CD8-positive, alpha-beta T cell (primary cell): ENCODE measurements at regions of chr2 and their contacts with region 1.

Region 1: DNA sequence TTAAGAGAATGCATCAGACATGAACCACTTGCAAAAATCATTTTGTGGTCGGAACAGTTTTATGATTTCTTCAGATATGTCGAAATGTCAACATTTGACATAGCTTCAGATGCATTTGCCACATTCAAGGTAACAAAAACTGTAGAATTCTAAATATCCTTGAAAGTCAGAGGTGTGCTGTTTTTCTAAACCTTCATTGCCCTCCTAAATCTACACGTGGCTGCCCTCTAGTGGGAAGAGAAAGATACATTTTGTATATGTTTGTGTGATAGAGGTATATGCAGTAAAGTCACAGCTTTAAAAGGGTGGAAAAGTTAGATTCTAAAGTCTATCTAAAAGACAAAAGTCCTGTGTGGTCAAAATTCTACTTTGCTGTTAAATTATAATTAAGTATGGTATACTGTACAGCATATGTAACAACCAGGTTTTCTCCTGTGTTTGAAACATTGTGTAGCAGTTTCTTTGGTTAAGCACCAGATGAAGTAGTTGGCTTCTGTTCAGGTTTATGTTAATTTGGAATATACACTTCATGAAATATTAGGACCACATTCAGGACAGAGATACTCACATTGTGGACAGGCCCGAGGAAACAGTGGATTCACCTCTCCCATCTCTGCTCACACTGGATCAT is 65.9 kb upstream of the ITM2C start:
- DNase-seq: peak in 7 of 9 experiments; percentile 22 to 76 (median 51)
- ATAC-seq: peak; percentile 32
- H3K4me3 ChIP-seq: no peak overlapping the region
- H3K4me3 Mint-ChIP-seq: no peak overlapping the region
- H3K27ac ChIP-seq: no peak overlapping the region
- H3K27ac Mint-ChIP-seq: peak overlapping the region; percentile 74
- H3K4me1 ChIP-seq: peaks cover 33% of the 10 kb centered on the region
- H3K4me1 Mint-ChIP-seq: peaks cover 13% of the 10 kb centered on the region
- H3K27me3 ChIP-seq: no peaks in the 10 kb centered on the region
- H3K27me3 Mint-ChIP-seq: no peaks in the 10 kb centered on the region
- CTCF ChIP-seq: peak; percentile 87

Region 2: DNA sequence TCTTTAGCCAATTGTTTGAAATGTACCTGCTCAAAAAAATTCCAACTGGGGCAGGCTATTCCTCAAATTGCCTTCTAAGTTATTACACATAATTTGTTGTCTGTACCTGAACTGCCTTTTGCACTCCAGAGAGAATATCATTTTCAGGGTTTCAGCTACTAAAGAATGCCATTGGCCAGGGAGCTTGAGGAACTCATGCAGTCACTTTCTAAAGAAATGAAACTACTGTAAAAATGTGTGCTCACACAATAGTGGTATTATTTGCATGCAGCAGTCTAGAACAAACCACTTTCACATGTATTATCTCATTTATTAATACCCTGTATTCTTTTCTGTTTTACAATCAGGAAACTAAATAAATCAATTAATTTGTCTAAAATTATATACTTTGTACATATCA is 1680.0 kb before region 1 on chr2:
- CTCF ChIA-PET with region 1: no interaction called
- POLR2A ChIA-PET with region 1: no interaction called
- intact Hi-C with region 1: no loop called
- DNase-seq: no peak
- ATAC-seq: no peak
- H3K4me3 ChIP-seq: no peak overlapping the region
- H3K4me3 Mint-ChIP-seq: no peak overlapping the region
- H3K27ac ChIP-seq: no peak overlapping the region
- H3K27ac Mint-ChIP-seq: no peak overlapping the region
- H3K4me1 ChIP-seq: no peaks in the 10 kb centered on the region
- H3K4me1 Mint-ChIP-seq: no peaks in the 10 kb centered on the region
- H3K27me3 ChIP-seq: no peaks in the 10 kb centered on the region
- H3K27me3 Mint-ChIP-seq: no peaks in the 10 kb centered on the region
- CTCF ChIP-seq: no peak

Region 3: DNA sequence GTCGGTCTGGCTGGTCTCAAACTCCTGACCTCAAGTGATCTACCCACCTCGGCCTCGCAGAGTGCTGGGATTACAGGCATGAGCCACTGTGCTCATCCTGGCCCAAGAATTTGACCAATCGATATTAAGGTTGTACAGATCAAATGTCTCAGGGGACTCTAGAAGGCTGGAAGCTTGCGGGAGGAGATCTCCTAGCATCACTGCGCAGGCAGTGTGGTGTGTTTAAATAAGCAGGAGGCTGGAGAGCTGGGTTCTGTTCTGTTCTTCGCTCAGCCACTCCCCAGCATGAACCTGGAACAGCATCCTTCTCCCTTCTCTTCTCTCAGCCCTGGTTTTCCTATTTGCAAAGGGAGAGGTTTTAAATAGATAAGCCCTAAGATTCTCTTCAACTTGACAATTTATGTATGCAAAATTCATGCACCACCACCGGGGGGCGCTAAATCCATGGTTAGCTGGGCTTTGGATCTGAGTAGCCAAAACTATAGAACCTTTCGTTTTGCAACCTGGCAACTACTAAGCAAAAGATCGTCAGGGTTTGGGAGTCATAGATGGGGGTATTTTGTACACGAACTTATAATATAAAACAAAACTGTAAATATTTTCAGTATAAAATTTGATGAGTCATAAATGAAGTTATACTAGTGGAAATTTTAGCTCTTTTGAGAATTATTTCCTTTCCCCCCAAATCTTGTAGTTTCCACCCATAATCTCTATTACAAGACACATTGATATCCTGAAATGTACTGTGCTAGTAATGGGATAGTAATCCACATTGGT is 790.8 kb before region 1 on chr2:
- CTCF ChIA-PET with region 1: no interaction called
- POLR2A ChIA-PET with region 1: no interaction called
- intact Hi-C with region 1: loop called (anchors 5 kb)
- DNase-seq: peak; percentile 56 to 87 (median 73)
- ATAC-seq: peak; percentile 48
- H3K4me3 ChIP-seq: no peak overlapping the region
- H3K4me3 Mint-ChIP-seq: no peak overlapping the region
- H3K27ac ChIP-seq: no peak overlapping the region
- H3K27ac Mint-ChIP-seq: no peak overlapping the region
- H3K4me1 ChIP-seq: no peaks in the 10 kb centered on the region
- H3K4me1 Mint-ChIP-seq: peaks cover 3% of the 10 kb centered on the region
- H3K27me3 ChIP-seq: no peaks in the 10 kb centered on the region
- H3K27me3 Mint-ChIP-seq: no peaks in the 10 kb centered on the region
- CTCF ChIP-seq: peak; percentile 83

Region 4: GRCh38 chr2:230319211-230319862 is 479.5 kb before region 1 on chr2:
- CTCF ChIA-PET with region 1: no interaction called
- POLR2A ChIA-PET with region 1: no interaction called
- intact Hi-C with region 1: loop called in 1 of 2 experiments (anchors 10 kb)
- DNase-seq: peak; percentile 37 to 92 (median 76)
- ATAC-seq: peak; percentile 96
- H3K4me3 ChIP-seq: peak overlapping the region; percentile 7 to 24
- H3K4me3 Mint-ChIP-seq: peak overlapping the region; percentile 63
- H3K27ac ChIP-seq: peak overlapping the region; percentile 58 to 61
- H3K27ac Mint-ChIP-seq: peak overlapping the region; percentile 89
- H3K4me1 ChIP-seq: peaks cover 52% of the 10 kb centered on the region
- H3K4me1 Mint-ChIP-seq: peaks cover 69% of the 10 kb centered on the region
- H3K27me3 ChIP-seq: no peaks in the 10 kb centered on the region
- H3K27me3 Mint-ChIP-seq: no peaks in the 10 kb centered on the region
- CTCF ChIP-seq: no peak

Region 5: DNA sequence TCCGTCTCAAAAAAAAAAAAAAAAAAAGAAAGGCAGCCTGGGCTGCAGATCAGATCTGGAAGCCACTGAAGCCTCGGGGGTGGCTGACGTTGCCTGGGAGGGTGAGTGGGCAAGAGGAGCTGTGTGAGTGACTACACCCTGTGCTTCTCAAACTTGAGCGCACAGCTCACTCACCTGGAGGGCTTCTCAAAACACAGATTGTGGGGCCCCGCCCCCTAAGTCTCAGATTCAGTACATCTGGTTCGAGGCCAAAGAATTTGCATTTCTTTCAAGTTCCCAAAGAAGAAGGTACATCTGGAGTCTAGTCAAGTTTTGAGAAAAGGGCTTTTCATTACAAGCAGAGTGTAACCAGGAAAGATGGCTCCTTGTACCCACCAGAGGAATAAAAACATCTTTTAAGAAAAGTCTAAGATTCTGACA is 184.0 kb before region 1 on chr2:
- CTCF ChIA-PET with region 1: interaction called, 16 read pairs
- POLR2A ChIA-PET with region 1: no interaction called
- intact Hi-C with region 1: loop called (anchors 5 to 10 kb)
- DNase-seq: peak in 2 of 9 experiments; percentile 33 to 35
- ATAC-seq: no peak
- H3K4me3 ChIP-seq: no peak overlapping the region
- H3K4me3 Mint-ChIP-seq: no peak overlapping the region
- H3K27ac ChIP-seq: no peak overlapping the region
- H3K27ac Mint-ChIP-seq: no peak overlapping the region
- H3K4me1 ChIP-seq: peaks cover 15% of the 10 kb centered on the region
- H3K4me1 Mint-ChIP-seq: peaks cover 22% of the 10 kb centered on the region
- H3K27me3 ChIP-seq: no peaks in the 10 kb centered on the region
- H3K27me3 Mint-ChIP-seq: no peaks in the 10 kb centered on the region
- CTCF ChIP-seq: no peak

Region 6: DNA sequence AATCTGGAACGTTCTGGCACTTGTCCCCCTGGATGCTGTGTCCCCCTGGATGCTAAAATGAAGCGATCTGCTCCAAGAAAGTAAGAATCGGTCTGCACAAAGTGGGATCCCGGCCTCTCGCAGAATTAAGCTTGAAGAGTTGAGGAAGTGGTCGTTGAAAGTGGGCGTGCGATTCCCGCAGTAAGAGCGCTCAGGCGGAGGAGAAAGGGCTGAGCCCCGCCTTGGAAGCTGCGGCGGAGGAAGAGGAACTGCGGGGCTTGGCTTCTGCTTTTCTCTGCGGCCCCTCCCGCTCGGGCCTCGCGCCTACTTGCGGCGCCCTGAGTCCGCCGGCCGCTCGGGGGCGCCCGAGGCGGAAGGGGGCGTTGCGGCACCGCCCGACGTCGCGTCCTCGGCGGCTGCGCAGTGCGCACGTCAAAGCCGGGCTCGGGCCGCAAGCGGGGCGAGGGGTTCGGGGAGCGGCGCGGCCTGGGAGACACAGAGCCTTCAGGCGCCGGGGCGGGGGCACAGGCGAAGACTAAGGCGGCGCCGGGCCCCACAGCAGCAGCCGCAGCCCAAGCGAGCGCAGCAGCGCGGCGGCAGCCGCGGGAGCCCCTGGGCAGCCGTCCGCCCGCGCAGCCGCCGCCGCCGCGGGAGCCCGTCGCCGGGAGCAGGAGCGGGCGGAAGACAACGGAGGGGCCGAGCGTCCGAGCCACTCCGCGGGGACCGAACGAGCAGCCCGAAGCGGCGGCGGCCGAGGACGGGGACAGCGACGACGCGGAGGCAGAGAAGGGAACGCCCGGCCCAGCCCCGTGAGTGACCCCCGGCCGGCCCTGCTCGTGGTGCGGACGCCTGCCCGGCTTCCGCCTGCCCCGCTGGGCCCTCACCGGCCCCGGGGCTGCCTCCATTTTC is 86.2 kb before region 1 on chr2 and contains the start of gene CAB39:
- CTCF ChIA-PET with region 1: interaction called, 25 read pairs
- POLR2A ChIA-PET with region 1: interaction called, 16 read pairs
- intact Hi-C with region 1: loop called (anchors 1 kb)
- DNase-seq: peak; percentile 76 to 95 (median 86)
- ATAC-seq: peak; percentile 87
- H3K4me3 ChIP-seq: peak within 1 kb of the TSS; percentile 76 to 79
- H3K4me3 Mint-ChIP-seq: peak within 1 kb of the TSS; percentile 95
- H3K27ac ChIP-seq: peak within 1 kb of the TSS; percentile 65 to 79
- H3K27ac Mint-ChIP-seq: peak within 1 kb of the TSS; percentile 97
- H3K4me1 ChIP-seq: peaks cover 30% of the 10 kb centered on the region
- H3K4me1 Mint-ChIP-seq: peaks cover 44% of the 10 kb centered on the region
- H3K27me3 ChIP-seq: no peaks in the 10 kb centered on the region
- H3K27me3 Mint-ChIP-seq: no peaks in the 10 kb centered on the region
- CTCF ChIP-seq: peak; percentile 76
- total RNA-seq, gene CAB39: 36.4 to 42.6 TPM

Region 7: GRCh38 chr2:230762317-230762896 is 36.5 kb before region 1 on chr2:
- CTCF ChIA-PET with region 1: interaction called, 9 read pairs
- POLR2A ChIA-PET with region 1: interaction called, 5 read pairs
- intact Hi-C with region 1: loop called (anchors 2 to 5 kb)
- DNase-seq: peak in 6 of 9 experiments; percentile 33 to 64 (median 47)
- ATAC-seq: peak; percentile 96
- H3K4me3 ChIP-seq: no peak overlapping the region
- H3K4me3 Mint-ChIP-seq: no peak overlapping the region
- H3K27ac ChIP-seq: no peak overlapping the region
- H3K27ac Mint-ChIP-seq: no peak overlapping the region
- H3K4me1 ChIP-seq: peaks cover 26% of the 10 kb centered on the region
- H3K4me1 Mint-ChIP-seq: peaks cover 61% of the 10 kb centered on the region
- H3K27me3 ChIP-seq: no peaks in the 10 kb centered on the region
- H3K27me3 Mint-ChIP-seq: no peaks in the 10 kb centered on the region
- CTCF ChIP-seq: peak; percentile 60

Region 8: GRCh38 chr2:232325437-232326278 is 1526.8 kb after region 1 on chr2:
- CTCF ChIA-PET with region 1: no interaction called
- POLR2A ChIA-PET with region 1: no interaction called
- intact Hi-C with region 1: no loop called
- DNase-seq: peak in 8 of 9 experiments; percentile 33 to 77 (median 55)
- ATAC-seq: peak; percentile 53
- H3K4me3 ChIP-seq: no peak overlapping the region
- H3K4me3 Mint-ChIP-seq: no peak overlapping the region
- H3K27ac ChIP-seq: no peak overlapping the region
- H3K27ac Mint-ChIP-seq: no peak overlapping the region
- H3K4me1 ChIP-seq: peaks cover 45% of the 10 kb centered on the region
- H3K4me1 Mint-ChIP-seq: peaks cover 48% of the 10 kb centered on the region
- H3K27me3 ChIP-seq: no peaks in the 10 kb centered on the region
- H3K27me3 Mint-ChIP-seq: no peaks in the 10 kb centered on the region
- CTCF ChIP-seq: peak; percentile 65